Heart left ventricle (tissue), 16 donors: ENCODE measurements at regions of chr2 and their contacts with region 1.

Region 1: GRCh38 chr2:11154923-11155380 is 315 bp upstream of the SLC66A3 start:
- DNase-seq: peak; percentile 98 to 99 (median 99)
- ATAC-seq: peak; percentile 93 to 97 (median 96)
- H3K4me3 ChIP-seq: peak overlapping the region; percentile 20 to 98 (median 87)
- H3K27ac ChIP-seq: peak overlapping the region; percentile 66 to 97 (median 94)
- H3K4me1 ChIP-seq: peaks cover 0 to 27% (median 15%) of the 10 kb centered on the region in 12 donors
- H3K27me3 ChIP-seq: no peaks in the 10 kb centered on the region
- CTCF ChIP-seq: no peak
- POLR2A ChIP-seq: no peak

Region 2: GRCh38 chr2:11203480-11203879 is 48.5 kb after region 1 on chr2:
- intact Hi-C with region 1: loop called in 1 of 10 experiments (anchors 1 kb)
- DNase-seq: no peak
- ATAC-seq: peak in 1 of 4 donors; percentile 15
- H3K4me3 ChIP-seq: no peak overlapping the region
- H3K27ac ChIP-seq: peak overlapping the region in 1 of 12 donors; percentile 44
- H3K4me1 ChIP-seq: peaks cover 0 to 25% (median 0%) of the 10 kb centered on the region in 12 donors
- H3K27me3 ChIP-seq: no peaks in the 10 kb centered on the region
- CTCF ChIP-seq: no peak
- POLR2A ChIP-seq: no peak